ENCODE measurements at regions of chr12 and their contacts with region 1.

Region 1: DNA sequence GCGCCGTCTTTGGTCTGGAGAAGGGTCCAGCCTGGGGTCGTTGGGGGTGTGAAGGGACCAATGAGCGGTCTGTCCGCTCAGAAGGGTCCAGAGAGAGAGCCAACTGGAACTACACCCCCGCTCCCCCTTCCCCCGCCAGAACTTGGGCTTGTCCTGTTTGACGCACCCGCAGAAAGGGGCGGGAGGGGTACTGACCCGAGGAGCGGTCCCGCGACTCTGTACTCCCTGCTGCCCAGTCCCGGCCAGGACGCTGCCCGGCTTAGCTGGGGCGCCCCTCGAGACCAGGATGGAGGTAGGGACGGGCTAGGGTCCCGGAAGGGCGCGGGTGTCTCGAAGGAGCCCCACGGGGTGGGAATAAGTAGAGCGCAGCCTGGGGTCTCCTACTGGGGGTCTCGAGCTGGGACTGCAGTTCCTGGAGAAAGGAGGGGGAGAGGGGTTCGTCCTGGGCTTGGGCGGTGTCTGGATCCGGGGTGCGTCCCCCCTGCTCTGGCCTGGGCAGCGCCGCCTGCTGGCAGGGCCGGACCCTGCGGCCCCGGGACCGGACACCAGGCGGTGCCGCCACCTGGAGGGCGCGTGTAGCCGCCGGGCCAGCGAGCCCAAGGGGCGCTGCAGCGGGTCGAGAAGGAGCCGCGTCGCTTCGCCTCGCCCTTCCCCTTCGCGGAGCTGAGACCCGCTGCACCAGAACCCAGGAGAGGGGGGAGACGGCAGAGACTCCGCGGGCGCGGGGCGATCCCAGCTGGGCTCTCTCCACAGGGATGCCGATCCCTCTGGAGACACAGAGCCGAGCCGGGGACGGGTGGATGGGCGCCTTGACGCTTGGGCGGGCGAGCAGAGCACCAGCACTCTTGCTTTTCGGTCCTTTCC is 3.8 kb upstream of the CACNB3 start:
- DNase-seq: peak; percentile 83
- H3K4me3 Mint-ChIP-seq: peak overlapping the region; percentile 91
- H3K27ac Mint-ChIP-seq: peak overlapping the region; percentile 60
- H3K4me1 Mint-ChIP-seq: peaks cover 44% of the 10 kb centered on the region
- H3K27me3 Mint-ChIP-seq: peaks cover 84% of the 10 kb centered on the region

Region 2: GRCh38 chr12:48640854-48641253 is 173.6 kb before region 1 on chr12:
- CTCF ChIA-PET with region 1: no interaction called
- DNase-seq: no peak
- H3K4me3 Mint-ChIP-seq: no peak overlapping the region
- H3K27ac Mint-ChIP-seq: no peak overlapping the region
- H3K4me1 Mint-ChIP-seq: peaks cover 2% of the 10 kb centered on the region
- H3K27me3 Mint-ChIP-seq: no peaks in the 10 kb centered on the region

Region 3: DNA sequence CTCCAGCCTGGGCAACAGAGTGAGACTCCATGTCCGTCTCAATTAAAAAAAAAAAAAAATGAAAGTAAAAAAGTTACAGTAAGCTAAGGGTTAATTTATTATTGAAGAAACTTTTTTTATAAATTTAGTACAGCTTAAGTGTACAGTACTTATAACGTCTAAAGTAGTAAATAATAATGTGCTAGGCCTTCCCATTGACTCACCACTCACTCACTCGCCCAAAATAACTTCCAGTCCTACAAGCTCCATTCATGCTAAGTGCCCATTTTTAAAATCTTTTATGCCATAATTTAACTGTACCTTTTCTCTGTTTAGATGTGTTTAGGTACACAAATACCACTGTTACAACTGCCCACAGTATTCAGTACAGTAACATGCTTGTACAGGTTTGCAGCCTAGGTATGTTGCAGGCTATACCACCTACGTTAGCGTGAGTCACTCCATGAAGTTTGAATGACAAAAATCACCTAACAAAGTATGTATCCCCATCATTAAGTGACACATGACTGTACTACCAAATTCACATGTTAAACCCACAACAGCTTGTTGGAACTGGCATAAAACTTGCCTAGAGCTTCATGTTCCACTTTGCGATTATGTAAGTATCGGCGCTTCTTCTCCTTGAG is 143.2 kb before region 1 on chr12:
- CTCF ChIA-PET with region 1: no interaction called
- DNase-seq: no peak
- H3K4me3 Mint-ChIP-seq: no peak overlapping the region
- H3K27ac Mint-ChIP-seq: peak overlapping the region; percentile 42
- H3K4me1 Mint-ChIP-seq: no peaks in the 10 kb centered on the region
- H3K27me3 Mint-ChIP-seq: no peaks in the 10 kb centered on the region

Region 4: DNA sequence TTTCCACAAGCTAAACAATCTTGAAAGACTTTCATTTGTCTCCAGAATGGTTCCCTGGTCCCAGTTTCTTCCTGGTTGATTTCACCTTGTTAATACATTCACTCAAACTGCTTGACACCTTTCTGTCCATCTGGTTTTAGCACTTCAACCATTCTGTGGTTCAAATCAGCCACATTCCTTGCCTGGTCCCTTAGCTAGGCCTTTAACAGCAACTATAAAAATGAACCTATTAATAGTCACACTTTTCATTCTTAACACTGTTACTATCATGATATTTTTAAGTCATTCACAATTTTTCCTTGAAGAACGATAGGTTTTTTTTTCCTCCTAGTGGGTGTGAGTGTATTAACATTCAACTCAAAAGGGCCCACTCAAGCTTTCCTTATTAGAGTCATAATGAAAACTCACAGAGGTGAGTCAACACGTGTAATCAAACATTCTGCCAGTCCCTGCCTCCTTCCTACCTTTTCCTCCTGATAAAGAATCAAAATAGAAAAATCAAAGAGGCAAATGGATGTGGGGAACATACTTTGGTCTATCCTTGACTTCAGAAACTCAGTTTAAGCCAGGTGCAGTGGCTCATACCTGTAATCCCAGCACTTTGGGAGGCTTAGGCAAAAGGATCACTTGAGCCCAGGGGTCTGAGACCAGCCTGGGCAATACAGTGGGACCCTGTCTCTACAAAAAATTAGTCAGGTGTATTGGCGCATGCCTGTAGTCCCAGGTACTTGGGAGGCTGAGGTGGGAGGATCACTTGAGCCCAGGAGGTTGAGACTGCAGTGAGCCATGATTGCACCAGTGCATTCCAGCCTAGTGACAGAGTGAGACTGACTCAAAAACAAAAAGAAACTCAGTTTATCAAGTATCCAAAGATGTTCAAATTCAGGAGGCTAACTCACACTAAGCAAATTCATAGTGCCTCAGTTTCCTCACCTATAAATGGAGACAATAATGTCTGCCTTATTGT is 63.4 kb before region 1 on chr12:
- CTCF ChIA-PET with region 1: interaction called, 10 read pairs
- DNase-seq: no peak
- H3K4me3 Mint-ChIP-seq: no peak overlapping the region
- H3K27ac Mint-ChIP-seq: no peak overlapping the region
- H3K4me1 Mint-ChIP-seq: no peaks in the 10 kb centered on the region
- H3K27me3 Mint-ChIP-seq: peaks cover 12% of the 10 kb centered on the region

Region 5: GRCh38 chr12:48865434-48866290 is 51.2 kb after region 1 on chr12 and contains the start of gene RND1:
- CTCF ChIA-PET with region 1: interaction called, 11 read pairs
- DNase-seq: peak; percentile 91
- H3K4me3 Mint-ChIP-seq: peak within 1 kb of the TSS; percentile 83
- H3K27ac Mint-ChIP-seq: peak within 1 kb of the TSS; percentile 80
- H3K4me1 Mint-ChIP-seq: peaks cover 26% of the 10 kb centered on the region
- H3K27me3 Mint-ChIP-seq: peaks cover 36% of the 10 kb centered on the region

Region 6: DNA sequence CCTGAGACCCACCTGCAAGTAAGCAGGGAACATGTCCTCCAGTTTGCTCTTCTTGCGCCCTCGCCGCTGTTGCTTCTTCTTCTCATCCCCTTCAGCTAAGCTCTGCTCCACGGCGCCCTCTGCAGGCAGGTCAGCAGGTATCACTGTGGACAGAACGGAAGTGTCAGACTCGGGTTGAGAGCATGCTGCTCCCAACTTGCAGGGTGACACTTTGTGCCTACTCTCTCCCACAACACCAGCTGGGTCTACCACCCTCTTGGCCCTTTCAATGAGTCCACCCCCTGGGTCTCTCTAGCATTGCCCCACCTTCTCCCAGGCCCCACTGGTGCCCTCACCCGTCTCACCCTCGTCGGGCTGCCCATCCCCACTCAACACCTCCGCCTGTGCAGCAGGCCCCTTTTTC is 229.4 kb after region 1 on chr12:
- CTCF ChIA-PET with region 1: no interaction called
- DNase-seq: peak; percentile 87
- H3K4me3 Mint-ChIP-seq: no peak overlapping the region
- H3K27ac Mint-ChIP-seq: no peak overlapping the region
- H3K4me1 Mint-ChIP-seq: peaks cover 6% of the 10 kb centered on the region
- H3K27me3 Mint-ChIP-seq: no peaks in the 10 kb centered on the region

Measured in activated naive CD4-positive, alpha-beta T cell treated with anti-CD3 and anti-CD28 coated beads, Interleukin-2, amount 10 ng/mL, durations not matched to agents 7 days and 5 days (primary cell).